ENCODE measurements at regions of chrX and their contacts with region 1.

Region 1: DNA sequence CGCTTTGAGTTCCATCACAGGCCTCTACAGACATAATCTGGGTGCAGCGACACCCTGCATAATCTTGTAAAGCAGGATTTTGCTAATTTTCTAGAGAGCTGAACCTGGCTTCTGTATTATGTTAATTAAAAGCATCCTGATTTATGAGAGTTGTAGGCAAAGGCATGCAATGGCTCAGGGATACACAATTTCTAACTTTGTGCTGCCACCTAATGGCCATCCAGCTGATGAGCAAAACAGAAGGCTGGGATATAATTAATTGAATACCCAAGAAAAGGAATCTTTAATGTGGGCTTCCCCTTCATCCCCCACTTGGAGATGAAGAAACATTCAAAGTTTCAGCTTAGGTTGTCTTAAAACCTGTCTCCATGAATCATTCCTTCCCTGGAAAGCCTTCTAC is 78.1 kb downstream of the BMP15 start:
- DNase-seq: no peak
- H3K4me3 Mint-ChIP-seq: no peak overlapping the region
- H3K27ac Mint-ChIP-seq: no peak overlapping the region
- H3K4me1 Mint-ChIP-seq: no peaks in the 10 kb centered on the region
- H3K27me3 Mint-ChIP-seq: no peaks in the 10 kb centered on the region

Region 2: GRCh38 chrX:50747471-50747900 is 241.2 kb before region 1 on chrX:
- intact Hi-C with region 1: loop called (anchors 2 kb)
- DNase-seq: no peak
- H3K4me3 Mint-ChIP-seq: no peak overlapping the region
- H3K27ac Mint-ChIP-seq: no peak overlapping the region
- H3K4me1 Mint-ChIP-seq: no peaks in the 10 kb centered on the region
- H3K27me3 Mint-ChIP-seq: peaks cover 4% of the 10 kb centered on the region

Region 3: GRCh38 chrX:51024077-51024696 is 35.5 kb after region 1 on chrX:
- intact Hi-C with region 1: no loop called
- DNase-seq: no peak
- H3K4me3 Mint-ChIP-seq: no peak overlapping the region
- H3K27ac Mint-ChIP-seq: no peak overlapping the region
- H3K4me1 Mint-ChIP-seq: no peaks in the 10 kb centered on the region
- H3K27me3 Mint-ChIP-seq: no peaks in the 10 kb centered on the region

Region 4: DNA sequence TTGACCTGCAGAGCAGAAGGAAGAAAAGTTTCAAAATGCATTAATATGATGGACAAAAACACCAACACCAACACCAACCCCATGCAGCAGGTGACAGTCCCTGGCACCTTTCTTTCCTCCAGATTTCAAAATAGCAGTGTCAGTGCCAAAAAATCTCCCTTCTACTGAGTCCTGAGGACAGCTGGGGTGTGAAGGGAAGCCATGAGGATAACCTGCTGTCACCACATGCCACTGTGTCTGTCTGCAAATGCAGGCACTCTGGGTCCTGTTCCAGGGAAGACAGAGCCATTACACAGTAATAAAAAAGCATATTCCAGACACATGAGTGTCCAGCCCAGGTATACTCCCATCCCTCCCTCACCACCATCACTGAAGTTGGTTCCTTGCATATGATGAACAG is 109.4 kb after region 1 on chrX:
- intact Hi-C with region 1: no loop called
- DNase-seq: no peak
- H3K4me3 Mint-ChIP-seq: no peak overlapping the region
- H3K27ac Mint-ChIP-seq: no peak overlapping the region
- H3K4me1 Mint-ChIP-seq: no peaks in the 10 kb centered on the region
- H3K27me3 Mint-ChIP-seq: no peaks in the 10 kb centered on the region

Measured in activated T-helper 1 cell treated with anti-CD3 and anti-CD28 coated beads, Interleukin-12 subunit alpha, Interleukin-12 subunit beta, Interleukin-2, Interleukin-4 antibody, amounts not matched to agents 30 ng/mL and 10 ng/mL and 1 ng/mL, durations not matched to agents 14 hours and 24 hours and 36 hours (primary cell).